ENCODE measurements at regions of chr19 and their contacts with region 1.

Region 1: DNA sequence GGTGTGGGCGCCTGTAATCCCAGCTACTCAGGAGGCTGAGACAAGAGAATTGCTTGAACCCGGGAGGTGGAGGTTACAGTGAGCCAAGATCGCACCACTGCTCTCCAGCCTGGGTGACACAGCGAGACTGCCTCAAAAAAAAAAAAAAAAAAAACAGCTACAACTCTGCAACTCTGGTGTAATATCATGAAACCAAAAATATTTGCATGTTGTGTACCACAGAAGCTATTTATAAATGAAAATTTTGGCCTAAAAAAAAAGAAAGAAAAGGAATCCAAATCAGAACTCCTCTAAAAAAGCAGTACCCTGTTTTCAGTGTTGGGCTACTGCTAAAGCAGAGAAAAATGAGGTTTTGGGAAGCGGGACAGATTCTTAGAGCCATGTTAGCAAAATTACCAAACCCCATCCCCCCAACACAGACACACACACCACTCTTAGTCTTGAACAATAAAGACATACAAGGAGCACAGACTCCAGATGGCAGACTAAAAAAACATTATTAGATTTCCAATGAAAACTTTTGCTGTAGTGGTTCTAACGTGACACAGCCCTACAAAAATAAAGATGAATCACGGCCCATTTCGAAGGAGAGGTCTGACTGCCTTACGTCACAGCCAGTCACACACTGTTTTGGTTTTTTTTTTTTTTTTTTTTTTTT is 51.5 kb downstream of the INSR start:
- DNase-seq: no peak
- ATAC-seq: peak; percentile 87
- H3K4me3 ChIP-seq: no peak overlapping the region
- H3K27ac ChIP-seq: peak overlapping the region; percentile 87 to 100
- H3K4me1 ChIP-seq: peaks cover 0 to 3% of the 10 kb centered on the region in 2 donors
- H3K27me3 ChIP-seq: no peaks in the 10 kb centered on the region

Region 2: DNA sequence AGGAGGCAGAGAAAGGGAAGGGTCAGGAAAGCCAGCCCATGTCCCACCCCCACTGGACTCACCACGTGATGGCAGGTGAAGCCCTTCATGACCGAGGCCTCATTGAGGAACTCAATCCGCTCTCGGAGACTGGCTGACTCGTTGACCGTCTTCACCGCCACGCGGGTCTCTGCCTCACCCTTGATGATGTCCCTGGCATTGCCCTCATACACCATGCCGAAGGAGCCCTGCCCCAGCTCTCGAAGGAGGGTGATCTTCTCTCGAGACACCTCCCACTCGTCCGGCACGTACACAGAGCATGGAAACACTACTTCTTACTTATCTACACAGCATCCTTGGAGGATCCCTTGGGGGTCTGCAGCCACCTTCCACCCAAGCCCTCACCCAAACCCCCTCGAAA is 117.5 kb before region 1 on chr19:
- intact Hi-C with region 1: no loop called
- DNase-seq: no peak
- ATAC-seq: no peak
- H3K4me3 ChIP-seq: no peak overlapping the region
- H3K27ac ChIP-seq: no peak overlapping the region
- H3K4me1 ChIP-seq: no peaks in the 10 kb centered on the region
- H3K27me3 ChIP-seq: no peaks in the 10 kb centered on the region

Region 3: GRCh38 chr19:7159105-7159933 is 83.4 kb before region 1 on chr19:
- intact Hi-C with region 1: loop called (anchors 5 kb)
- DNase-seq: peak; percentile 83 to 87
- ATAC-seq: peak; percentile 94
- H3K4me3 ChIP-seq: no peak overlapping the region
- H3K27ac ChIP-seq: peak overlapping the region; percentile 73 to 77
- H3K4me1 ChIP-seq: no peaks in the 10 kb centered on the region
- H3K27me3 ChIP-seq: no peaks in the 10 kb centered on the region

Region 4: GRCh38 chr19:7224209-7224686 is 18.5 kb before region 1 on chr19:
- intact Hi-C with region 1: no loop called
- DNase-seq: no peak
- ATAC-seq: peak; percentile 24
- H3K4me3 ChIP-seq: no peak overlapping the region
- H3K27ac ChIP-seq: no peak overlapping the region
- H3K4me1 ChIP-seq: no peaks in the 10 kb centered on the region
- H3K27me3 ChIP-seq: no peaks in the 10 kb centered on the region